ENCODE measurements at regions of chr6 and their contacts with region 1.

Region 1: DNA sequence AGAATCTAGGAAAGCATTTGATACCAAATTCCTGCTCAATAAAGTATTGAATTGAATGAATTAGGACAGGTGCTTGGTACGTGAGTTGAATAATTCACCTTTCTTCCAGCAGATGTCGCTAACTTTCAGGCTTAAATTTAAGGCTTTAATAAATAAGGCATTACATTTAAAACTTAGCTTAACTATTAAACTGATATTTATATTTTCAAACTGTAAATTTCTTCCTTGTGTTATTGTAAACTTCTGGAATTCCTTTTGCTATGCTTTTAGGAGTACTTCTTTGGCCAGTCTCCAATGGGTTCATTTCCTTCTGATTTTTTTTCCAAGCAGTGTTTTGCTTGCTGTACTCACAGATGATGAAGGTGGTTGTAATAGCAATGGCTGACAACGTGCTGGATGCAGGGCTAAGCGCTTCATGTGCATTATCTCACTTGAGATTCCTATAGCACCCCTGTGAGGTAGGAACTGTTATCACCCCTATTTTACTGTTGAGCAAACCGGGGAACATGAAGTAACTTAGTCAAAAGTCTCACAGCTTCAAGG is 71.3 kb upstream of the SLC2A12 start:
- DNase-seq: no peak
- H3K4me3 ChIP-seq: peak overlapping the region in 1 of 59 donors; percentile 13
- H3K27ac ChIP-seq: no peak overlapping the region
- H3K27me3 ChIP-seq: no peaks in the 10 kb centered on the region
- CTCF ChIP-seq: peak; percentile 62 to 92 (median 80)

Region 2: DNA sequence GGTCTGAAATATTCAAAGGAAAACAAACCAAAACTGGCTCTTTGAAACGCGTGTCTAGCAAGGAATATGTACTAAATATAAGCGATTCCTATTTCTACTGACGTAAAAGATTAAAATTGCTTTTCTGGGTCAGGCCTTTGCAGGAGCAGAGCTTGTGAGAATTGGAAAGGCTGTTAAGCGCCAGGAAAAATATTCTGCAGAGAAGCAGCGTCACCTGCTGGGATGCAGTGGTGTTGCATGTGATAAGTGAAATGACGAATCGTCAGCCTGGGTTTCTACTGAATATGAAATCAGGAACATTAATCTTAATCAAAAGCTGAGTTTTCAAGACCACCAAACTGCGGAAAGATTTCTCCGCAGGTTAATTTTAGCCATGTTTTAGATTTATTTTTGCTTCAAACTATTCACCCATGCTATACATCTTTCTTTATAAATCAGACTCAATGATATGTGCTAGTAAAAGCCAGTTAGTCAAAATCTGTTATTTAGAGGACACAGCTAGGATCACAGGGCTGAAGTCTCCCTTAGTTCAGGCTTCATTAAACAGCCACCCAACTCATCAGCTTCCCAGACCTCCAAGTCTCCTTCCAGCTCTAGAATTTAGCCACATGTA is 758.8 kb after region 1 on chr6:
- intact Hi-C with region 1: loop called in 1 of 2 experiments (anchors 5 kb)
- DNase-seq: peak; percentile 65 to 82 (median 74)
- H3K4me3 ChIP-seq: peak overlapping the region in 9 of 59 donors; percentile 0 to 27 (median 15)
- H3K27ac ChIP-seq: peak overlapping the region in 51 of 59 donors; percentile 15 to 88 (median 68)
- H3K27me3 ChIP-seq: no peaks in the 10 kb centered on the region
- CTCF ChIP-seq: peak; percentile 53 to 100 (median 96)